Activated CD4-positive, alpha-beta T cell treated with anti-CD3 and anti-CD28 coated beads for 36 hours (primary cell): ENCODE measurements at regions of chr12 and their contacts with region 1.

Region 1: GRCh38 chr12:103548622-103549601 is 38.2 kb upstream of the STAB2 start:
- DNase-seq: peak; percentile 85
- ATAC-seq: peak; percentile 79
- H3K4me3 Mint-ChIP-seq: no peak overlapping the region
- H3K27ac Mint-ChIP-seq: no peak overlapping the region
- H3K4me1 Mint-ChIP-seq: peaks cover 5% of the 10 kb centered on the region
- H3K27me3 Mint-ChIP-seq: peaks cover 17% of the 10 kb centered on the region

Region 2: DNA sequence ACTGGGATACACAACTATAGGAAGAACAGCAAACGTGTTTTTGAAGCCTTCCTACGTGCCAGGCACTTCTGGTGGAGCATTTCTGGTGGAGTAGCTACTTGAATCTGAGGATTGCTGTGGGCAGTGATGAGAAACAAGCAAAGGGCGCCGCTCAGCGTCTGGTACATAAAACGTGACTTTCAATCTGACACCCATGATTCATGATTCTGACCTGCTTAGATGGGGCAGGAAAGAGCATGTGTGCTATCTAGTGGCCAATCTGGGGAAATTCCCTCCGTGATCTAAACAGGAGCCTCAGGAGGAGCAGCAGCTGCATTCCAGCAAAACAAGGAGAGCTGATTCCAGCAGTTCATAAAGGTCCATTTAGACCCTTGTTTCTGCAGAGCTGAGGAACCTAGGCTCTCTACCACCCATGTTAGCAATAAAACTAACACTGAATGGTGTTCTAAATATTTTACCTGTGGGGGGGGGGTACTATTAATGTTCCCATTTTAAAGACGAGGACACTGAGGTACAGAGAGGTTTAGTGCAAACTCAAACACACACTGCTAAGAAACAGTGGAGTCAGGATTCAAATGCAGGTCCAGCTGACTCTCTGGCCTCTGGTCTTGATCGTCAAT is 669.7 kb before region 1 on chr12:
- CTCF ChIA-PET with region 1: interaction called, 21 read pairs
- POLR2A ChIA-PET with region 1: no interaction called
- intact Hi-C with region 1: loop called (anchors 1 kb)
- DNase-seq: peak; percentile 50
- ATAC-seq: peak; percentile 81
- H3K4me3 Mint-ChIP-seq: no peak overlapping the region
- H3K27ac Mint-ChIP-seq: no peak overlapping the region
- H3K4me1 Mint-ChIP-seq: no peaks in the 10 kb centered on the region
- H3K27me3 Mint-ChIP-seq: peaks cover 14% of the 10 kb centered on the region

Region 3: DNA sequence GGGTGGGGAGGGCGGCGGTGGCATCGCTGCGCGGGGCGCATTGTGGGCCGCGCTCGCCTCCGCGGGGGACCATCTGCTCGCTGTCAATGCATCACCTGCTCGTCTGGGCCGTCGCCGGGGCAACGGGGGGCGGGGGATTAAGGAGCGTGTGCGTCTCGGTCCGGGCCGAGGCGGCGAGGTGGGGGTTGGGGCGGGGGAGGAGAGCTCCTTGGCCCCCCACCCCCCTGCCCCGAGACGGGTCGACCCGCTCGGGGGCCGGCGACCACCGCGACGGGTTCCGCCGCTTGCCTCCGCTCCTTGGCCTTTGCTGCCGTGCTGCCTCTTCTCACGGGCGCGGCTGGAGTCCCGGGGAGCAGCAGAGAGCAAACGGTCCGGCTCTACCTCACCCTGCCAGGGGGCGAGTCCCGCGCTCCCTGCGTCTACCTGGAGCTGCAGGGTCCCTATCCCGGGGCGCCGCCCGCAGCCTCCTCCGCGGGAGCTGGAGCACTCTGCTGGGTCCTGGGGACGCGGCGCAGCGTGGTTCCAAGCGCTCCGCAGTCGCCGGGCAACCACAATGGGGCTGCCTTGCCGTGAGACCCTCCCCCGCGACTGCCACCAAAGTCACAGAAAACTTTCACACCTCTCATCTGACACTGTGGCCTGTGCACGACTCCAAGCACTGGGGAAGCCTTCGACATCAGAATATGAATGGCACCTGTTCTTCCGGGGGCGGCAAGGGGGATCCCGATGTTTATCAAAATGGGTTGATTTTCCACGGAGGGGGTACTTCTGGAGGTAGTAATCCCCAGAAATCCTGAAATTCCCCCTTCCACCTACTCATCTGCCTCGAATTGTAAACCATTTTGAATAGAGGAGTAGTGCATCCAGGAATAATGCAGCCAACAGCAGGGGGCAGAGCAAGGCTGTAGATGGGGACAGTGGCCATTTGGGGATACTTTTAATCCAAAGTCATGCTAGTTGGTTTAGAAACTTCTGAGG is 53.1 kb before region 1 on chr12 and contains the start of gene C12orf42:
- CTCF ChIA-PET with region 1: interaction called, 12 read pairs
- POLR2A ChIA-PET with region 1: no interaction called
- intact Hi-C with region 1: loop called (anchors 1 kb)
- DNase-seq: peak; percentile 67
- ATAC-seq: peak; percentile 47
- H3K4me3 Mint-ChIP-seq: peak within 1 kb of the TSS; percentile 58
- H3K27ac Mint-ChIP-seq: no peak within 1 kb of the TSS
- H3K4me1 Mint-ChIP-seq: peaks cover 23% of the 10 kb centered on the region
- H3K27me3 Mint-ChIP-seq: peaks cover 36% of the 10 kb centered on the region
- total RNA-seq, gene C12orf42: 0.23 TPM in 1 of 2 experiments, not detected in the other

Region 4: DNA sequence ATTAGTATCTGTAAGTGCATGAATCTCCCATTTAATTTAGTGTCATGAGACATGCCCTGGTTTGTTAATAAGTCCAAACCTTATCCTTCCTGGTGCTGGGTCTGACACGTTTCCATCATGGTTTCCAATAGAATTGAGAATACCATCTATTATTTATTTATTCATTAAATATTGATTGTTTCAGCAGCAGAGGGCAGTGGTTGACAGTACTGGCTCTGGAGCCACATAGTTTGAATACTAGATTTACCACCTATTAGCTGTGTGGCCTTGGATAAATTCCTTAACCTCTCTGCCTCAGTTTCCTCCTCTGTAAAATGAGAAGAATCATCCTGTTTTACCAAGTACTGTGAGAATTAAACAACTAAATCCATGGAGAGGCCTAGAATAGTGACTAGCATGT is 37.2 kb after region 1 on chr12:
- CTCF ChIA-PET with region 1: no interaction called
- POLR2A ChIA-PET with region 1: no interaction called
- intact Hi-C with region 1: no loop called
- DNase-seq: no peak
- ATAC-seq: no peak
- H3K4me3 Mint-ChIP-seq: no peak overlapping the region
- H3K27ac Mint-ChIP-seq: no peak overlapping the region
- H3K4me1 Mint-ChIP-seq: no peaks in the 10 kb centered on the region
- H3K27me3 Mint-ChIP-seq: peaks cover 14% of the 10 kb centered on the region